ENCODE measurements at regions of chr11 and their contacts with region 1.

Region 1: GRCh38 chr11:60251485-60252212 is 8.7 kb upstream of the MS4A4E start:
- DNase-seq: peak; percentile 28
- H3K4me3 Mint-ChIP-seq: no peak overlapping the region
- H3K27ac Mint-ChIP-seq: no peak overlapping the region
- H3K4me1 Mint-ChIP-seq: no peaks in the 10 kb centered on the region
- H3K27me3 Mint-ChIP-seq: peaks cover 28% of the 10 kb centered on the region

Region 2: GRCh38 chr11:60235321-60235720 is 16.3 kb before region 1 on chr11:
- CTCF ChIA-PET with region 1: no interaction called
- POLR2A ChIA-PET with region 1: no interaction called
- DNase-seq: no peak
- H3K4me3 Mint-ChIP-seq: no peak overlapping the region
- H3K27ac Mint-ChIP-seq: no peak overlapping the region
- H3K4me1 Mint-ChIP-seq: no peaks in the 10 kb centered on the region
- H3K27me3 Mint-ChIP-seq: peaks cover 15% of the 10 kb centered on the region

Region 3: DNA sequence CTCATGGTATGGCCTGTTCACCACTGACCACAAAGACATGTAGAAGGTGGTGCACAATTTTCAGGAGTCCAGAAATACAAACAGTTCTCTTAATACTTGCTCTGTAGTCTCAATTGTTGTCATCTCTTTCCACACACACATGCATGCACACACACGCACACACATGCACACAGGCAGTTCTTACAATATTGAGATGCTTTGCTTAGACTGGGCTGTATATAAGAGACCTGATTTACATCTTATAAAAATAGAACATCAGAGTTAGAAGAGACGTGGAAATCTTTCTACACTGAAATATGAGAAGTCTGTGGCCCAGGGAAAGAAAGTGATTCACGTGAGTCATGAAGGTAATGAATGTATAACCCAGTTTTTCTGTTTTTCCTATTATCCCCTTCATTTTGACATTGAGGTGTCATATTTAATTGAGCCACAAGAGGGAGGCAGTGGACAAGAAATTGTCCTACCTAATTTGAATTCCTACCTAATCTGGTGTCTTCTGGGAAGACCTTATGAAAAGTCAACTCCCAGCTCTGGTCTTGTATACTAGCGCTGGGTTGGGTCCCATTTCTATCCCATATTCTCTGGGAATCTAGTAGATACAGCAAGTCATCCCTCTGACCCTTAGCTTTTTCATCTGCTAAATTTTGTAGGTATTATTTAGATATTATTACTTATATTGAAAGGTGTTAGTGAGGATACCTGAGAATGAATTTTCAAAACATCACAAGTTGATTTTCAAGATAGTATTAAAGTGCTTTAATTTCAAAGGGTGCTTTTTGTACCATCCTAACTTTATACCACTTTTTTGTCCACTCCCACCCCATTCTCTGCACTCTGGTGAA is 13.9 kb after region 1 on chr11:
- CTCF ChIA-PET with region 1: interaction called, 10 read pairs
- POLR2A ChIA-PET with region 1: no interaction called
- DNase-seq: peak; percentile 15
- H3K4me3 Mint-ChIP-seq: no peak overlapping the region
- H3K27ac Mint-ChIP-seq: no peak overlapping the region
- H3K4me1 Mint-ChIP-seq: no peaks in the 10 kb centered on the region
- H3K27me3 Mint-ChIP-seq: peaks cover 13% of the 10 kb centered on the region

Region 4: GRCh38 chr11:60280412-60280811 is 28.8 kb after region 1 on chr11 and contains the start of gene MS4A4A:
- CTCF ChIA-PET with region 1: no interaction called
- POLR2A ChIA-PET with region 1: no interaction called
- DNase-seq: no peak
- H3K4me3 Mint-ChIP-seq: no peak within 1 kb of the TSS
- H3K27ac Mint-ChIP-seq: no peak within 1 kb of the TSS
- H3K4me1 Mint-ChIP-seq: no peaks in the 10 kb centered on the region
- H3K27me3 Mint-ChIP-seq: peaks cover 10% of the 10 kb centered on the region
- total RNA-seq, gene MS4A4A: not detected

Region 5: DNA sequence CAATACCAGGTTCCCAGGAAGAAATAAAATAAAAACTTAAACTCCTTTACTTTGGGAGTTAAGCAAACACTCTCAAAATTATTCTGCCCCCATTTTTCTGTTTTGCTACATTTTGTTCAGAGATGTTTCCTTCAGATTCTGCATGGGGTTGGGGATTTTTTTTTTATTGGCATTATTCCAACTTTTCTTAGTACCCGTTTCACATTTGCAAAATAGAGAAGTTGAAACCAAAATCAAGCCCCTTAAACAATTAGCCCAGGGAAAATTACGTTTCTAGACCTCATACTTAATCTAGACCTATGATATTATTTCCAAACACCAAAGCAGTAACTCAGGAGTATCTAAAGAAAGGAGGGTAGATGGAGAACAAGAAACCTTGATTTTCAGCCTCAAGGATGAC is 106.1 kb after region 1 on chr11:
- CTCF ChIA-PET with region 1: no interaction called
- POLR2A ChIA-PET with region 1: no interaction called
- DNase-seq: no peak
- H3K4me3 Mint-ChIP-seq: no peak overlapping the region
- H3K27ac Mint-ChIP-seq: no peak overlapping the region
- H3K4me1 Mint-ChIP-seq: no peaks in the 10 kb centered on the region
- H3K27me3 Mint-ChIP-seq: peaks cover 5% of the 10 kb centered on the region

Measured in activated CD4-positive, alpha-beta T cell treated with anti-CD3 and anti-CD28 coated beads, Interleukin-2, amount 10 ng/mL, durations not matched to agents 7 days and 5 days (primary cell).